ENCODE measurements at regions of chr1 and their contacts with region 1.

Region 1: DNA sequence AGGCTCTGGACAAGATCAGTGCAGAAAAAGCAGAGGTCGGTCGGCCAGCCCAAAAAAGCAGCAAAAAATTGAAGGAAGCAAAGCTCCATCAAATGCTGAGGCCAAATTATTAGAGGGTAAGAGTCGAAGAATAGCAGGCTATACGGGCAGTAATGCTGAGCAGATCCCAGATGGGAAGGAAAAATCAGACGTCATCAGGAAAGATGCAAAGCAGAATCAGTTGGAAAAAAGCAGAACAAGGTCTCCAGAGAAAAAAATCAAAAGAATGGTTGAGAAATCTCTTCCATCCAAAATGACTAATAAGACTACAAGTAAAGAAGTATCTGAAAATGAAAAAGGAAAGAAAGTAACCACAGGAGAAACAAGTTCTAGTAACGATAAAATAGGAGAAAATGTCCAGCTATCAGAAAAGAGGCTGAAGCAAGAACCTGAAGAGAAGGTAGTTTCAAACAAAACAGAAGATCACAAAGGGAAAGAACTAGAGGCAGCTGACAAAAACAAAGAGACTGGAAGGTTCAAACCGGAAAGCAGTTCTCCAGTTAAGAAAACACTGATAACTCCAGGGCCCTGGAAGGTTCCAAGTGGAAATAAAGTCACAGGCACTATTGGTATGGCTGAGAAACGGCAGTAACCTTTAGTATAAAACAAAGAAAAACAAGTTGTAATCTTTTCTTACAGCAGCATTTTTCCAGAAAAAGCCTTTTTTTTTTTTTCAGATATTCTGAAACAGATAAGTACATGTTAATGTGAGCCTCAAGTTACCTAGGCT is 75.7 kb downstream of the PHTF1 start:
- DNase-seq: no peak
- ATAC-seq: no peak
- H3K4me3 ChIP-seq: no peak overlapping the region
- H3K4me3 Mint-ChIP-seq: no peak overlapping the region
- H3K27ac ChIP-seq: no peak overlapping the region
- H3K27ac Mint-ChIP-seq: no peak overlapping the region
- H3K4me1 ChIP-seq: no peaks in the 10 kb centered on the region
- H3K4me1 Mint-ChIP-seq: no peaks in the 10 kb centered on the region
- H3K27me3 ChIP-seq: no peaks in the 10 kb centered on the region
- H3K27me3 Mint-ChIP-seq: no peaks in the 10 kb centered on the region
- CTCF ChIP-seq: no peak

Region 2: GRCh38 chr1:113314600-113314999 is 369.0 kb before region 1 on chr1:
- CTCF ChIA-PET with region 1: no interaction called
- POLR2A ChIA-PET with region 1: no interaction called
- intact Hi-C with region 1: no loop called
- DNase-seq: no peak
- ATAC-seq: no peak
- H3K4me3 ChIP-seq: no peak overlapping the region
- H3K4me3 Mint-ChIP-seq: no peak overlapping the region
- H3K27ac ChIP-seq: no peak overlapping the region
- H3K27ac Mint-ChIP-seq: no peak overlapping the region
- H3K4me1 ChIP-seq: no peaks in the 10 kb centered on the region
- H3K4me1 Mint-ChIP-seq: no peaks in the 10 kb centered on the region
- H3K27me3 ChIP-seq: peaks cover 0 to 12% of the 10 kb centered on the region in 2 experiments
- H3K27me3 Mint-ChIP-seq: peaks cover 17% of the 10 kb centered on the region
- CTCF ChIP-seq: no peak

Region 3: DNA sequence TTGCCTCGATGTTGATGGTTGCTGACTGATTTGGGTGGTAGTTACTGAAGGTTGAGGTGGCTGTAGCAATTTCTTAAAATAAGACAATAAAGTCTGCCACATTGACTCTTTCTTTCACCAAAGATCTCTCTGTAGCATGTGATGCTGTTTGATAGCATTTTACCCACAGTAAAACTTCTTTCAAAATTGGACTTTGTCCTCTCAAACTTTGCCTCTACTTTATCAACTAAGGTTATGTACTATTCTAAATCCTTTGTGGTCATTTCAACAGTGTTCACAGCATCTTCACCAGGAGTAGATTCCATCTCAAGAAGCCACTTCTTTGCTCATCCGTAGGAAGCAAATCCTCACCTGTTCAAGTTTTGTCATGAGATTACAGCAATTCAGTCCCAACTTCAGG is 17.4 kb before region 1 on chr1:
- CTCF ChIA-PET with region 1: no interaction called
- POLR2A ChIA-PET with region 1: no interaction called
- intact Hi-C with region 1: loop called in 1 of 2 experiments (anchors 2 kb)
- DNase-seq: no peak
- ATAC-seq: no peak
- H3K4me3 ChIP-seq: no peak overlapping the region
- H3K4me3 Mint-ChIP-seq: no peak overlapping the region
- H3K27ac ChIP-seq: no peak overlapping the region
- H3K27ac Mint-ChIP-seq: no peak overlapping the region
- H3K4me1 ChIP-seq: no peaks in the 10 kb centered on the region
- H3K4me1 Mint-ChIP-seq: no peaks in the 10 kb centered on the region
- H3K27me3 ChIP-seq: no peaks in the 10 kb centered on the region
- H3K27me3 Mint-ChIP-seq: no peaks in the 10 kb centered on the region
- CTCF ChIP-seq: no peak